ENCODE measurements at regions of chrX and their contacts with region 1.

Region 1: GRCh38 chrX:149286940-149287349 is 218.2 kb downstream of the IDS start:
- DNase-seq: peak in 1 of 2 donors; percentile 70
- ATAC-seq: peak in 2 of 3 donors; percentile 36 to 77
- H3K4me3 ChIP-seq: no peak overlapping the region
- H3K4me3 Mint-ChIP-seq: no peak overlapping the region
- H3K27ac ChIP-seq: no peak overlapping the region
- H3K27ac Mint-ChIP-seq: no peak overlapping the region
- H3K4me1 ChIP-seq: no peaks in the 10 kb centered on the region
- H3K4me1 Mint-ChIP-seq: no peaks in the 10 kb centered on the region
- H3K27me3 ChIP-seq: no peaks in the 10 kb centered on the region
- H3K27me3 Mint-ChIP-seq: peaks cover 8 to 31% of the 10 kb centered on the region in 2 donors
- CTCF ChIP-seq: peak; percentile 61

Region 2: DNA sequence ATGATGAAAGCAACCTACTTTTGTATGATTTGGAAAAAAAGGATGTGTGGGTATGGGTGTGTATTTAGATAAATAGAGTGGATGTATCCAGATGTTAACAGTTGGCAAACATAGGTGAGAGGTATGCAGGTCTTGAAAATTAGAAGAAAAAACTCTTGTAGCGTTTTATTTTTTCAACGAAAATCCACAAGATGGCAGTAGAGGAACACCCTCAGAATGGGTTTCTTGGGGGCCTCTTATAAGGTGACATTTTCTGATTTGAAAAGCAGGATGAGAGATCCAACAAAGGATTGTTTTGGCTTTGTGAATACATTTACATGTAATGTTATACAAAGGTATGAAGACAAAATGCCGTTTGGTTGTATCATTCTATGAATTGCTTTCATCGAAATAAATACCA is 1237.5 kb before region 1 on chrX:
- intact Hi-C with region 1: loop called (anchors 1 kb)
- DNase-seq: peak in 1 of 2 donors; percentile 52
- ATAC-seq: peak in 1 of 3 donors; percentile 45
- H3K4me3 ChIP-seq: no peak overlapping the region
- H3K4me3 Mint-ChIP-seq: no peak overlapping the region
- H3K27ac ChIP-seq: no peak overlapping the region
- H3K27ac Mint-ChIP-seq: no peak overlapping the region
- H3K4me1 ChIP-seq: no peaks in the 10 kb centered on the region
- H3K4me1 Mint-ChIP-seq: no peaks in the 10 kb centered on the region
- H3K27me3 ChIP-seq: no peaks in the 10 kb centered on the region
- H3K27me3 Mint-ChIP-seq: peaks cover 3 to 13% of the 10 kb centered on the region in 2 donors
- CTCF ChIP-seq: peak; percentile 61

Region 3: GRCh38 chrX:148133105-148133725 is 1153.7 kb before region 1 on chrX:
- intact Hi-C with region 1: loop called (anchors 10 kb)
- DNase-seq: peak in 1 of 2 donors; percentile 39
- ATAC-seq: no peak
- H3K4me3 ChIP-seq: no peak overlapping the region
- H3K4me3 Mint-ChIP-seq: no peak overlapping the region
- H3K27ac ChIP-seq: no peak overlapping the region
- H3K27ac Mint-ChIP-seq: no peak overlapping the region
- H3K4me1 ChIP-seq: no peaks in the 10 kb centered on the region
- H3K4me1 Mint-ChIP-seq: no peaks in the 10 kb centered on the region
- H3K27me3 ChIP-seq: no peaks in the 10 kb centered on the region
- H3K27me3 Mint-ChIP-seq: no peaks in the 10 kb centered on the region
- CTCF ChIP-seq: no peak

Region 4: DNA sequence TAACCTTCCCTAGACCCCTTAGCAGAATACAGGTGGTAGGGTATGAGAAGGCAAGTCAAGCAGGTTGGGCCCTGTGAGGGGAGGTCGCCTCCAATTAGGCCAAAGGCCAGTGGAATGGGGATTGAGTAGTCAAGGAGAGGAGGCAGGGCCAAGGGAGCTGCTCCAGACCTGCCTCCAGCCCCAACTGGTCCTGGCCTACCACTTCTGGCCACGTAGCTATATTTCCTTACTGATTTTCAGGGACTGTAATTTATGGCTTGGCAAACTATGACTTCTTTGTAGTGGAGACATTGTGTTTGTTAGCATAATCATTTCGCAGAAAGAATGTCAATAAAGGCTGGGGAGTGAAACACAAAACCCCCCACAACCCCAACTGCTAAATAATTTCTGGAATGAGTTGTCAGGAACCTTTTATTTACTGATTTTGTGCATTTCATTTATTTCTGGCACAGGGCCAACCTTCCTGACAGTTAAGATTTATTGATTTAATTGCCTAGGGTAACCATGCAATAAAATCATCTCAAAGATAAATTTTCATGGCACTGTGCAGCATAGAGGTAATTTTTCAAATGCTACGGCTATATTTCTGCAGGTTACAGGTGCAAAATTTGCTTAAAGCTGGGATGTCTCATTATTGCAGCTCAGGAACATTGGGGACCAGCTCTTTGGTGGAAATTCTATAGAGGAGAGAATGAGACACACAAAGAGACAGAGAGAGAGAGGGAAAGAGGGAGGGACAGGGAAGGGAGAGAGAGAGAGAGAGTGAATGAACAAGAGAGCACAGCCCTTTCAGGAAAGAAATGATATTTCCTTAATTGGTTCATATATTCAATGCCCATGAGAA is 276.7 kb before region 1 on chrX:
- intact Hi-C with region 1: no loop called
- DNase-seq: no peak
- ATAC-seq: no peak
- H3K4me3 ChIP-seq: no peak overlapping the region
- H3K4me3 Mint-ChIP-seq: no peak overlapping the region
- H3K27ac ChIP-seq: no peak overlapping the region
- H3K27ac Mint-ChIP-seq: no peak overlapping the region
- H3K4me1 ChIP-seq: no peaks in the 10 kb centered on the region
- H3K4me1 Mint-ChIP-seq: no peaks in the 10 kb centered on the region
- H3K27me3 ChIP-seq: no peaks in the 10 kb centered on the region
- H3K27me3 Mint-ChIP-seq: peaks cover 0 to 2% of the 10 kb centered on the region in 2 donors
- CTCF ChIP-seq: no peak